ENCODE measurements at regions of chr6 and their contacts with region 1.

Region 1: GRCh38 chr6:88963139-88964090 is at the start of gene RNGTT:
- DNase-seq: peak; percentile 95 to 96 (median 96)
- H3K4me3 ChIP-seq: peak within 1 kb of the TSS; percentile 79 to 99
- H3K4me3 Mint-ChIP-seq: peak within 1 kb of the TSS; percentile 90 to 99 (median 98)
- H3K27ac ChIP-seq: peak within 1 kb of the TSS; percentile 68
- H3K27ac Mint-ChIP-seq: peak within 1 kb of the TSS; percentile 88 to 98 (median 97)
- H3K4me1 ChIP-seq: peaks cover 30% of the 10 kb centered on the region
- H3K4me1 Mint-ChIP-seq: peaks cover 27 to 56% (median 34%) of the 10 kb centered on the region in 4 donors
- H3K27me3 ChIP-seq: no peaks in the 10 kb centered on the region
- H3K27me3 Mint-ChIP-seq: no peaks in the 10 kb centered on the region
- total RNA-seq, gene RNGTT: 17.4 to 21.8 TPM

Region 2: GRCh38 chr6:87407901-87408720 is 1555.3 kb before region 1 on chr6 and contains the start of gene CFAP206:
- CTCF ChIA-PET with region 1: no interaction called
- POLR2A ChIA-PET with region 1: no interaction called
- intact Hi-C with region 1: loop called (anchors 5 kb)
- DNase-seq: peak; percentile 79 to 88 (median 85)
- H3K4me3 ChIP-seq: peak within 1 kb of the TSS; percentile 75 to 84
- H3K4me3 Mint-ChIP-seq: peak within 1 kb of the TSS; percentile 88 to 96 (median 89)
- H3K27ac ChIP-seq: peak within 1 kb of the TSS; percentile 67
- H3K27ac Mint-ChIP-seq: peak within 1 kb of the TSS; percentile 83 to 93 (median 89)
- H3K4me1 ChIP-seq: peaks cover 11% of the 10 kb centered on the region
- H3K4me1 Mint-ChIP-seq: peaks cover 4 to 13% (median 5%) of the 10 kb centered on the region in 4 donors
- H3K27me3 ChIP-seq: no peaks in the 10 kb centered on the region
- H3K27me3 Mint-ChIP-seq: peaks cover 4 to 10% of the 10 kb centered on the region in 2 donors
- total RNA-seq, gene CFAP206: 0.25 TPM in 1 of 2 experiments, not detected in the other

Region 3: GRCh38 chr6:89297695-89298351 is 334.4 kb after region 1 on chr6:
- CTCF ChIA-PET with region 1: interaction called, 3 read pairs
- POLR2A ChIA-PET with region 1: interaction called, 5 read pairs
- intact Hi-C with region 1: loop called (anchors 1 kb)
- DNase-seq: peak; percentile 63 to 89 (median 71)
- H3K4me3 ChIP-seq: peak overlapping the region in 1 of 2 donors; percentile 23
- H3K4me3 Mint-ChIP-seq: peak overlapping the region; percentile 42 to 85 (median 78)
- H3K27ac ChIP-seq: peak overlapping the region; percentile 48
- H3K27ac Mint-ChIP-seq: peak overlapping the region; percentile 96 to 99 (median 97)
- H3K4me1 ChIP-seq: peaks cover 29% of the 10 kb centered on the region
- H3K4me1 Mint-ChIP-seq: peaks cover 18 to 37% (median 22%) of the 10 kb centered on the region in 4 donors
- H3K27me3 ChIP-seq: no peaks in the 10 kb centered on the region
- H3K27me3 Mint-ChIP-seq: no peaks in the 10 kb centered on the region

Region 4: DNA sequence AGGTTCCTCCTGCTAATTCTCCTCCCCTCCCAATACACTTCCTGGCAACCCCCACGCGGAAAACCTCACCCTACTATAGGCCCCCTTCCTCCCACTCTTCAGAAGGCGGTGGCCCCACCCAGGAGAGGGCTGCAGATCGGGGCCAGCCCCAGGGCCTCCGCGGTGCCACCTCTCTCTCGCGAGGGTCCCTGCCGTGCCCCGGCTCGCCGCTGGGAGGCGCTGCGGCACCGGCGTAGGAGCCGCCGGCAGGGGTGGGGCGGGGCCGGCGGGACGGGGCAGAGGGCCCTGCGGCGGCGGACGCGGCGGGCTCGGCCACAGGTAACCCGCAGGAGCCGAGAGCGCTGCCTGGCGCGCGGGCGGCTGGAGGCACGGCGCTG is 469.4 kb after region 1 on chr6 and contains the start of gene ANKRD6:
- CTCF ChIA-PET with region 1: interaction called, 3 read pairs
- POLR2A ChIA-PET with region 1: no interaction called
- intact Hi-C with region 1: loop called (anchors 2 kb)
- DNase-seq: peak; percentile 68 to 86 (median 80)
- H3K4me3 ChIP-seq: peak within 1 kb of the TSS; percentile 39 to 44
- H3K4me3 Mint-ChIP-seq: peak within 1 kb of the TSS; percentile 88 to 93 (median 90)
- H3K27ac ChIP-seq: peak within 1 kb of the TSS; percentile 37
- H3K27ac Mint-ChIP-seq: peak within 1 kb of the TSS; percentile 47 to 90 (median 86)
- H3K4me1 ChIP-seq: peaks cover 10% of the 10 kb centered on the region
- H3K4me1 Mint-ChIP-seq: peaks cover 16 to 34% (median 24%) of the 10 kb centered on the region in 4 donors
- H3K27me3 ChIP-seq: no peaks in the 10 kb centered on the region
- H3K27me3 Mint-ChIP-seq: peaks cover 3 to 4% of the 10 kb centered on the region in 2 donors
- total RNA-seq, gene ANKRD6: 4.4 to 5.8 TPM

Region 5: DNA sequence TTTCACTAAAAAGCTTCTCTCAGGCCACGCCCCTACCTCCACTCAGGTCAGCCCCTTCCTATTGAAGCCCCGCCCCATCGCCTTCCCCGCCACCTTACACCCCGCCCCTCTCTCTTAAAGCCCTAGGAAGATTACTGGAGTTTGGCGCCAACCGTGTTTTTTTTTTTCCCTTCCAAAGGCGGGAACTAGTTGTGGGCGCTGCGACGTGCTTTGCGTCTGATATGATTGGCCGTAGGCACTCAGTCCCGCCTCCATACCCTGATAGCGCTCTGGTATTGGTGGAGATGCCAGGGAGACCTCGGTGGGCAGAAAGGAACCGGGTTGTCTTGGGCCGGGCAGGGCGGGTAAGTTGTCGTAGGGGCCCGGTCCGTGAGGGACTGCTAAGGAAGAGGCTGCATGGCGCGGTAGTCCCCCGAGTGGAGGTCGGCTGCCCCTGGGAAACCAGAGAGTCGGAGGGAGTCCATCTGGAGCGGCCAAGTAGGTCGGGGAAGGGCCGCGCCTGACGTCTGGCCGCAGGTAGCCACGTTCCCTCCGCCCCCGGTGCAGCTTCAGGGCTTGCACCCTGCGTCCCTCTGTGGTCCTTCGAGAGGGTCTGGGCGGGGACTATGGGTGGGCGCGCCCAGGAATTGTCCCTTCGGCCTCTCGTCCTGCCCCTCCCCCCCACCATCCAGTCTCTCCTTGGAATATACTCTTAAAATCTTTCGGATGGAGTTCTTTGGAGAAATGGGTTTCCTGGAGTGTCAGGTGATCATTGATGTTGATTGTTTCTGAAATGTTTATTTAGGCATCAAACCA is 866.4 kb after region 1 on chr6 and contains the start of gene CASP8AP2:
- CTCF ChIA-PET with region 1: no interaction called
- POLR2A ChIA-PET with region 1: no interaction called
- intact Hi-C with region 1: loop called (anchors 1 kb)
- DNase-seq: peak; percentile 93 to 98 (median 98)
- H3K4me3 ChIP-seq: peak within 1 kb of the TSS; percentile 85 to 86
- H3K4me3 Mint-ChIP-seq: peak within 1 kb of the TSS; percentile 98 to 100 (median 99)
- H3K27ac ChIP-seq: peak within 1 kb of the TSS; percentile 74
- H3K27ac Mint-ChIP-seq: peak within 1 kb of the TSS; percentile 79 to 99 (median 97)
- H3K4me1 ChIP-seq: peaks cover 32% of the 10 kb centered on the region
- H3K4me1 Mint-ChIP-seq: peaks cover 17 to 52% (median 37%) of the 10 kb centered on the region in 4 donors
- H3K27me3 ChIP-seq: no peaks in the 10 kb centered on the region
- H3K27me3 Mint-ChIP-seq: no peaks in the 10 kb centered on the region
- total RNA-seq, gene CASP8AP2: 59.4 to 61.7 TPM

Measured in CD4-positive, alpha-beta memory T cell (primary cell).